OCI-LY7 (cell line): ENCODE measurements at regions of chr6 and their contacts with region 1.

Region 1: GRCh38 chr6:163413345-163414116 is 987 bp upstream of the QKI start:
- DNase-seq: peak; percentile 90
- H3K4me3 ChIP-seq: peak overlapping the region; percentile 72
- H3K27ac ChIP-seq: peak overlapping the region; percentile 74
- H3K4me1 ChIP-seq: peaks cover 18% of the 10 kb centered on the region
- CTCF ChIP-seq: no peak

Region 2: GRCh38 chr6:162964488-162965140 is 448.9 kb before region 1 on chr6:
- CTCF ChIA-PET with region 1: no interaction called
- POLR2A ChIA-PET with region 1: no interaction called
- intact Hi-C with region 1: no loop called
- DNase-seq: no peak
- H3K4me3 ChIP-seq: no peak overlapping the region
- H3K27ac ChIP-seq: no peak overlapping the region
- H3K4me1 ChIP-seq: no peaks in the 10 kb centered on the region
- CTCF ChIP-seq: no peak

Region 3: DNA sequence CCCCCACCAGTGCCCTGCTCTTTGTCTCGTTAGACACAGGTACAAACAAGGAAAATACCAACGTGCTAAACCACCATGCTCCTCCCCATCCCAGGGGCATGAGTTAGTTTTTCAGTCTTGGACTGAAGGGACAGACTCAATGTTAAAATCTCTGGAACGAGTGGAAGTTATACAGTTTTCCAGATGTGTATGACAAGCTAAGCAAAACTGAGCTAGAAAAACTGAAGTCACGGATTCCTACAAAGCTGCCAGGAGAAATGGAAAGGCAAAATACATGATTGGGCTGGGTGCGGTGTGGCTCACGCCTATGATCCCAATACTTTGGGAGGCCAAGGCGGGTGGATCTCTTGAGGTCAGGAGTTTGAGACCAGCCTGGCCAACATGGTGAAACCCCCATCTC is 33.3 kb before region 1 on chr6:
- CTCF ChIA-PET with region 1: no interaction called
- POLR2A ChIA-PET with region 1: interaction called, 10 read pairs
- intact Hi-C with region 1: no loop called
- DNase-seq: no peak
- H3K4me3 ChIP-seq: no peak overlapping the region
- H3K27ac ChIP-seq: no peak overlapping the region
- H3K4me1 ChIP-seq: no peaks in the 10 kb centered on the region
- CTCF ChIP-seq: no peak

Region 4: GRCh38 chr6:163711615-163712565 is 298.4 kb after region 1 on chr6:
- CTCF ChIA-PET with region 1: no interaction called
- POLR2A ChIA-PET with region 1: interaction called, 6 read pairs
- intact Hi-C with region 1: loop called (anchors 2 kb)
- DNase-seq: peak; percentile 84
- H3K4me3 ChIP-seq: peak overlapping the region; percentile 25
- H3K27ac ChIP-seq: peak overlapping the region; percentile 62
- H3K4me1 ChIP-seq: peaks cover 75% of the 10 kb centered on the region
- CTCF ChIP-seq: peak; percentile 77

Region 5: GRCh38 chr6:163956571-163957407 is 543.3 kb after region 1 on chr6:
- CTCF ChIA-PET with region 1: no interaction called
- POLR2A ChIA-PET with region 1: no interaction called
- intact Hi-C with region 1: loop called (anchors 1 kb)
- DNase-seq: peak; percentile 84
- H3K4me3 ChIP-seq: no peak overlapping the region
- H3K27ac ChIP-seq: no peak overlapping the region
- H3K4me1 ChIP-seq: no peaks in the 10 kb centered on the region
- CTCF ChIP-seq: peak; percentile 99